GM10248 (cell line): ENCODE measurements at regions of chr9 and their contacts with region 1.

Region 1: DNA sequence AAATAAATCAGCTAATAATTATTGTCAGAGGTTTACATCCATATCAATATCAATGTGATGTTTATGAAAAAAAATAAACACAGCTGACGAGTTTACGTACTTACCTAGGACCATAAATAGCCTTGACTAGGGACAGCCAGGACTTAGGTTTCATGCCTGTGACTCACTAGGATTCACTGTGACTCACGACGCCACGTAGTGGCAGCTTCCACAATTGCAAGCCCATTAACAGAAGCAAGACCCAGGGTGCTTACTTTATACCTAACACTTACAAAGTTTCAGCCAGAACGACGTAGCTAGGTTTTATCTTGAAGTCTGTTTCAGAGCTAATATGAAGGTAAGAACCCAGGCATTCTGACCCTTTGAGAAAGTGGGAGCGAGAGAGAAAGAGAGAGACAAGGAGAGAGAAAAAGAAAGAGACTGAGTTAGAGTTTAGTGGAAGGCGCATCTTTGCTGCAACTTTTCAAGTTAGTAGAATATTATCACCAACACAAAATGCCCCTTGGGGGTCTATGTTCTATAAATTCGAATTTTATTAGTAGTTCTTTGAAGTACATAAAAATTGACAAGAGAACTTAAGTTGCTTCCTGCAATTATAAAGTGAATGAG is 191.2 kb downstream of the GNA14 start:
- DNase-seq: peak; percentile 79
- CTCF ChIP-seq: peak; percentile 82

Region 2: DNA sequence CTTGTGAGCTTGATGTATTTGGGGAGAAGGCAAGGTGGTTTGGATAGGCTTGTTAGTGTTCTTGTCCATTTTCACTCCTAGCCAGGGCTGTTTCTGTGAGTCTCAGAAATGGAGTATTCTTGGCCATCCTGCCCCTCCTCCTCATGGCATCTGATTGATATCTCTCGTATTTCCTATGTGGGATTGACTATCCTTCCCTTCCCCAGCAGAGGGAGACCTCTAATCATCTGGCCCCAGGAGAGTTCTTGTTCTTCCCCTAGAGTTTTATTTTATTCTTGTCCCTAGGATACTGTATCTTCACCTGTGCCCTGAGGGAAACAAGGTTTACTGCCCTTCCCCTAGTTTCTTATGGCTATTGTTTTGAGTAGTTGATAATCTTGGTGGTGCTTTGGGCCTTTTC is 165.2 kb before region 1 on chr9:
- CTCF ChIA-PET with region 1: no interaction called
- POLR2A ChIA-PET with region 1: no interaction called
- DNase-seq: no peak
- CTCF ChIP-seq: peak; percentile 9

Region 3: GRCh38 chr9:77417566-77417965 is 39.4 kb before region 1 on chr9:
- CTCF ChIA-PET with region 1: interaction called, 23 read pairs
- POLR2A ChIA-PET with region 1: no interaction called
- DNase-seq: no peak
- CTCF ChIP-seq: no peak

Region 4: DNA sequence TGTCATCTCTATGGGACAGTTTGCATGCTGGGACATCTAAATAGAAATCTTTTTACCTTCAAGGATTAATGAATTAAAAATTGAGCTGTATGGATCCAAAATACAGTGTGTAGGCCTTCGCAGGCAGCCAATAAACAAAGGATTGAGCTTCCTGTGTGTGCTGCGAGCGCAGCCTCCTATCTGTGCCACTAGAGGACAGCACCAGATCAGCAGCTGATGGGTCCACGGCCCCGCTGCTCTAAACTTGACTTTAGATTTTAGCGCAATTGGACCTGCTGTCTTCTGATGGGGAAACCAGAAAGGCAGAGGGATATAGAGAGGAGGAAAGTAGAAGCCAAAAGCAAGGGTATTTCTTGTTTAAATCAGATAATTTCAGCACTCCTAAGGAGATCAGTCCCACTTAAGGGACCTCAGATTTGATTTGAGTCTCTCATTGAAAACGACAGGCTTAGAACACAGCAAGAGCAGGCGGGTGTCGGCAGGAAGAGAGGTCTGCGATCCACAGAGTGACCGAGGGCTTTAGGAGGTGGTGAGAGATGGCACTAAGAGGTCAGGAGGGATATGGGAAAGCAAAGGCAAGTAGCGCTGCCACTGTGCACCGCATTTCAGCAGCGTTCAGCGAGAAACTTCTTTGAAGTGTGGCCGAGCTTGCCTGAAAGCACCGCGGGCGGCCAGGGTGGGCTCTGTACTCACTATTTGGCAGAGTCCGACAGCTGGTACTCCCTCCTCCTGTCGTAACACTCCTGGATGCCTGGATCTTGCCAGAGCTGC is 23.1 kb before region 1 on chr9:
- CTCF ChIA-PET with region 1: interaction called, 162 read pairs
- POLR2A ChIA-PET with region 1: no interaction called
- DNase-seq: peak; percentile 73
- CTCF ChIP-seq: peak; percentile 92

Region 5: GRCh38 chr9:77469515-77470231 is 12.7 kb after region 1 on chr9:
- CTCF ChIA-PET with region 1: interaction called, 99 read pairs
- POLR2A ChIA-PET with region 1: no interaction called
- DNase-seq: no peak
- CTCF ChIP-seq: no peak

Region 6: GRCh38 chr9:77488439-77489126 is 31.6 kb after region 1 on chr9:
- CTCF ChIA-PET with region 1: interaction called, 33 read pairs
- POLR2A ChIA-PET with region 1: no interaction called
- DNase-seq: no peak
- CTCF ChIP-seq: peak; percentile 23

Region 7: GRCh38 chr9:77944556-77945243 is 487.8 kb after region 1 on chr9:
- CTCF ChIA-PET with region 1: no interaction called
- POLR2A ChIA-PET with region 1: no interaction called
- DNase-seq: no peak
- CTCF ChIP-seq: no peak